ENCODE measurements at regions of chr2 and their contacts with region 1.

Region 1: DNA sequence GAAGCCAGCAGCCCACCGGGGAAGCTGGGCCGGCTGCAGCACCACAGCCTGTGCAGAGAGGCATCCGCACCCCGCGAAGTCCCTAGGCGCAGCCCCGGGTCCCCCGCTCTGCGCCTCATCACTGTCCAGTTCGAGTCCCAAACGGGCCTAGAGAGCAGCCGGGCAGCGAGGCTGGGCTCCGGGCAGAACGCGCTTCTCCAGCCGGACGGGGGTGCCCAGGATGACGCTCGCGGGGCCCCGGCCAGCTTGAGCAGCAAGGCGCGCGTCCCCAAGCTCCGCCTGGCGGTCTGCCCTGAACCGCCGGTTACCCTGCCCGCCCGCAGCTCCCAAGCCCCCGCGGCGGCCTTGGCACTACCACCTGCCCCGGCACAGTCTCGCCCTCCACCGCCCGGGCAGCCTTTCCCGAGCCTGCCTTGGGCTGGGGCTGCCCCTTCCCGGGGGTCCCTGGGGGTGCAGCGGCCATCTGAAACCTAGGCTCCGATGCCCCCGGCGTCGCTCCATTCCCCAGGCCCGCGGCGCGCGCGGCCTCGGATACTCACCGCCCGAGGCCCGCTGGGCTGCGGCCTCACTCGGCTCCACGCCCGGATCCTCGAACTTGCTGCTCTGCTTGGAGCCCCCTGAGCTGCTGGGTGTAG is 591 bp downstream of the SLC16A14 start:
- DNase-seq: no peak
- H3K4me3 ChIP-seq: peak overlapping the region; percentile 60
- H3K27ac ChIP-seq: no peak overlapping the region
- H3K27me3 ChIP-seq: peaks cover 11% of the 10 kb centered on the region
- CTCF ChIP-seq: 0 out of 2 replicates have a peak, but pooled peaks have one; percentile 4

Region 2: DNA sequence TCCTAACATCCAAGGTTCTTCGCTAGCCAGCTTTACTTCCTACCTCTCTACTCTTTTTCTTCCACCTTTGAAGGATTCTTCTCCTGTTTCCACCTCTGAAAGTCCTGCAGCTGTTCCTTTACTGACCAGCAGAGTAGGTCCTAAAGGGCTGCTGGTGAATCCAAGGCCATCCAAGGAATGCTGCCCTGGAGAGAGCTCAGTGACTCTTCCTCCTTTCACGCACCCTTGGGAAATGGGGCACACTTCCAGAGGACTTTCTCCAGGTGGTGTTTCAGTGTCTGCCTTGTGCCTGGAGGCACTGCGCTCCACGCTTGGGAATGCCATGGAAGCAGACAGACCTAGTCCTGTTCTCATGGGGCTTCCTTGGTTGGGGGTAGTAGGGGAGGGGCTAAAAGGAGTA is 44.8 kb before region 1 on chr2:
- CTCF ChIA-PET with region 1: interaction called, 15 read pairs
- POLR2A ChIA-PET with region 1: no interaction called
- DNase-seq: no peak
- H3K4me3 ChIP-seq: no peak overlapping the region
- H3K27ac ChIP-seq: no peak overlapping the region
- H3K27me3 ChIP-seq: no peaks in the 10 kb centered on the region
- CTCF ChIP-seq: no peak

Region 3: DNA sequence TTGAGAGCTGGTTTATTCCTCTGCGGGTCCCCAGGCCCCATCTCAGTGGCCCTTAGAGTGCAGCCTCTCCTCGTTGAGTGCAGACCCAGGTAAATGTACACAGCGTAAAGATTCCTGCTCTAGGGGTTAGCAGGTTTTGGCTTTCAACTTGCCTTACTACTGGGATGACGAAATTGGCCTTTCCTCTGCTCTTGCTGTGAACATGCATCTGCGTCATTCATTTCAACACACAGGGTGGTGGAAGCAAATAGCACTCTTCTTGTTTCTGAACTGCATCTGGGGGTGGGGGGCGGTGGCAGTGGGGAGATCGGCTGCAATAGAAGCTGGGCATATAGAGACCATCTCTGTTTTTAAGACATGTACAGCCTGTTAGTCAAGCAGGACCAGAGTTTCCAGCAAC is 17.1 kb after region 1 on chr2:
- CTCF ChIA-PET with region 1: interaction called, 26 read pairs
- POLR2A ChIA-PET with region 1: no interaction called
- DNase-seq: no peak
- H3K4me3 ChIP-seq: no peak overlapping the region
- H3K27ac ChIP-seq: no peak overlapping the region
- H3K27me3 ChIP-seq: no peaks in the 10 kb centered on the region
- CTCF ChIP-seq: no peak

Region 4: DNA sequence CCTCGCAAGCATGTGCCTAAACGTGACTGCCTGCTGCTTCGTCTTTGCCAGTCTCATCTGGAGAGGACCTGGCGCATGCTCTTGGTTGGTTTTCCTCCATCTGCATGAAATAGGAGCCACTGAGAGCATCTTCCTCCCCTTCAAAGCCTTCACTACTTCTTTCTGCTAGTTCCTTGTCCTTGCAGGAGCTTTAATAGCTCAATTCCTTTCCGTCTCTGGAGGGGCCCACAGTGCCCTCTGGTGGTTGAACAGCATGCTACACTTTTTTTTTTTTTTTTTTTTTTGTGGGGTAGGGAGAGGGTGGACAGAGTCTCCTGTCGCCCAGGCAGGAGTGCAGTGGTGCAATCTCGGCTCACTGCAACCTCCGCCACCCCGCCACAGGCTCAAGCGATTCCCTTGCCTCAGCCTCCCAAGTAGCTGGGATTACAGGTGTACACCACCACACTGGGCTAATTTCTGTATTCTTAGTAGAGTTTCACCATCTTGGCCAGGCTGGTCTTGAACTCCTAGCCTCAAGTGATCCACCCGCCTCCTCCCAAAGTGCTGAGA is 92.1 kb after region 1 on chr2:
- CTCF ChIA-PET with region 1: interaction called, 75 read pairs
- POLR2A ChIA-PET with region 1: interaction called, 5 read pairs
- DNase-seq: peak; percentile 7
- H3K4me3 ChIP-seq: no peak overlapping the region
- H3K27ac ChIP-seq: no peak overlapping the region
- H3K27me3 ChIP-seq: no peaks in the 10 kb centered on the region
- CTCF ChIP-seq: peak; percentile 80

Region 5: GRCh38 chr2:230202430-230203109 is 134.4 kb after region 1 on chr2:
- CTCF ChIA-PET with region 1: no interaction called
- POLR2A ChIA-PET with region 1: no interaction called
- DNase-seq: no peak
- H3K4me3 ChIP-seq: no peak overlapping the region
- H3K27ac ChIP-seq: no peak overlapping the region
- H3K27me3 ChIP-seq: no peaks in the 10 kb centered on the region
- CTCF ChIP-seq: no peak

Region 6: GRCh38 chr2:230219419-230220331 is 151.5 kb after region 1 on chr2 and contains the start of gene SP110:
- CTCF ChIA-PET with region 1: interaction called, 6 read pairs
- POLR2A ChIA-PET with region 1: interaction called, 14 read pairs
- DNase-seq: peak; percentile 69
- H3K4me3 ChIP-seq: peak within 1 kb of the TSS; percentile 84
- H3K27ac ChIP-seq: peak within 1 kb of the TSS; percentile 67
- H3K27me3 ChIP-seq: no peaks in the 10 kb centered on the region
- CTCF ChIP-seq: no peak
- polyA plus RNA-seq, gene SP110: 7.8 and 8.2 TPM in 2 replicates

Region 7: DNA sequence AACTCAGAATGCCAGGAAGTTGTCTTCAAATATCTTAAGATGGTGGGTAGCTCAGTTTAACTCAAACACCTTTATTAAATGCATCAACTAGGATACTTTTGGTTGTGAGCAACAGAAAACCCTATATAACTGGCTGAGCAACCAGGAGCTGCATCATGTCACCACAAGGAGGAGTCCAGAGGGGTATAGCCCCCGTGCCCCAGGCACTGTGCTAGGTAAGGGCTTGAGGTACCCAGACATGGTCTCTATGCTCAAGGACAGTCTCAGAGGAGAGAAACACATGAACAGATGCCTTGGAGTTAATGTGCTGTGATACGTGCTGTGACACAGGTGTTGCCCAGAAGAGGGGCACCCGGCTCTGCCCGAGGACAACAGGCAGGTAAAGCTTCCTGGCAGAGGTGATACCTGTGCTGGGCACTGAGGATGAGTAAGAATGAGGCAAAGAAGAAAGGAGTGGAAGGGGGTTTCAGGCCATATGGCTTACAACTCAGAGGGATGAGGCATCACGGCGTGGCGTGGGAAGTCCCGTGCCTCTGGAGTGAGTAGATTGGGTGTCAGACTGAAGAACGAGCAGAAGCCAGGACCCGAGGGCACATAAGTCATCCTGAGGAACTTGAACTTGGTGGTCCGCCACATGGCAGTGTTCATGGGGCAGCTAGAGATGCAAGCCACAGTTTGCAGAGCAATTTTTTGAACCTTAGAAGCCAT is 612.5 kb after region 1 on chr2:
- CTCF ChIA-PET with region 1: interaction called, 16 read pairs
- POLR2A ChIA-PET with region 1: no interaction called
- DNase-seq: no peak
- H3K4me3 ChIP-seq: no peak overlapping the region
- H3K27ac ChIP-seq: no peak overlapping the region
- H3K27me3 ChIP-seq: no peaks in the 10 kb centered on the region
- CTCF ChIP-seq: no peak